WTC11 (cell line): ENCODE measurements at regions of chr20 and their contacts with region 1.

Region 1: GRCh38 chr20:45470262-45470931 is 844 bp downstream of the WFDC2 start:
- DNase-seq: peak; percentile 69
- ATAC-seq: peak; percentile 63
- H3K4me3 Mint-ChIP-seq: peak overlapping the region; percentile 77
- H3K27ac Mint-ChIP-seq: peak overlapping the region; percentile 92
- H3K4me1 Mint-ChIP-seq: peaks cover 45% of the 10 kb centered on the region
- H3K27me3 Mint-ChIP-seq: peaks cover 7% of the 10 kb centered on the region
- CTCF ChIP-seq: no peak

Region 2: GRCh38 chr20:45355209-45356084 is 115.0 kb before region 1 on chr20:
- CTCF ChIA-PET with region 1: no interaction called
- POLR2A ChIA-PET with region 1: no interaction called
- DNase-seq: no peak
- ATAC-seq: no peak
- H3K4me3 Mint-ChIP-seq: no peak overlapping the region
- H3K27ac Mint-ChIP-seq: no peak overlapping the region
- H3K4me1 Mint-ChIP-seq: peaks cover 31% of the 10 kb centered on the region
- H3K27me3 Mint-ChIP-seq: no peaks in the 10 kb centered on the region
- CTCF ChIP-seq: no peak

Region 3: DNA sequence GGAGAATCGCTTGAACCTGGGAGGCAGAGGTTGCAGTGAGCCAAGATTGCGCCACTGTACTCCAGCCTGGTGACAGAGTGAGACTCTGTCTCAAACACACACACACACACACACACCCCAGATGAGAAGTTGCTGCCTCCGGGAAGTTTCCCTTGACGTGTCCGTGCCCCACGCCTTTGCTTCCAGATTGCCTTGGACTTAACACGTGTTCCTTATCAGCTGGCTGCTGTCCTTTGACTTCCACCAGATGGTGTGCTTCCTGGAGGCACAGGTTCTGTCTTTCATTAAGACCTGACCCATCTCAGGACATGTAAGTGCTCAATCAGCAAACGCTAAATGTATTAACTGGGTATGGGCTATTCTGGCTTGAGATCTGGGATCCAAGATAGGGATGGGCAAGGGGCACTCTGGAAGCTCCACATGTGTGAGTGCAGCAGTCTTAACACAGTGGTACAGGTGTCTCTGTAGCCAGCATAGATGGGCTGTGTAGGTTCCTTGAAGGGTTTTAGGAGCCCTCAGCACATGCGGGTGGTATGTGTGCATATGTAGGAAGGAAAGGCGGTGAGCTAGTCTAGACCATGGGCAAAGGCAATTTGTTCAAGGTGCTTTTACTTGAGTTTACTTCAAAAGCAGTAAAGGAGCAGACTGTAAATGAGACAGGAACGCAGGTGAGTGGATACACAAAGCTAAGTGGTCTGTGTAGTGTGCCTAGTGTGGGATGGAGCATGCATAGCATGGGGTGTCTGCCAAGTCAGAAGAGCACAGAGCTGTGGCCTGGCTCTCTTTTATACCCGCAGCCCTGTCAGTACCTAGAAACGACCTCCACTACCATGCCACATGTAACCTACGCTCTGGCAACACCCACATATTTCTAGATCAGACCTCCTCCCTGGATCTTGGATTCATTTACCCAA is 42.9 kb before region 1 on chr20:
- CTCF ChIA-PET with region 1: no interaction called
- POLR2A ChIA-PET with region 1: no interaction called
- DNase-seq: no peak
- ATAC-seq: 0 out of 2 replicates have a peak, but pooled peaks have one; percentile 26
- H3K4me3 Mint-ChIP-seq: no peak overlapping the region
- H3K27ac Mint-ChIP-seq: no peak overlapping the region
- H3K4me1 Mint-ChIP-seq: no peaks in the 10 kb centered on the region
- H3K27me3 Mint-ChIP-seq: no peaks in the 10 kb centered on the region
- CTCF ChIP-seq: no peak

Region 4: GRCh38 chr20:45450097-45450818 is 20.1 kb before region 1 on chr20:
- CTCF ChIA-PET with region 1: interaction called, 24 read pairs
- POLR2A ChIA-PET with region 1: no interaction called
- DNase-seq: no peak
- ATAC-seq: peak; percentile 59
- H3K4me3 Mint-ChIP-seq: no peak overlapping the region
- H3K27ac Mint-ChIP-seq: no peak overlapping the region
- H3K4me1 Mint-ChIP-seq: peaks cover 3% of the 10 kb centered on the region; the same call in 1 of the 2 replicates
- H3K27me3 Mint-ChIP-seq: peaks cover 3% of the 10 kb centered on the region; the same call in 1 of the 2 replicates
- CTCF ChIP-seq: peak; percentile 70